GM10248 (cell line): ENCODE measurements at regions of chr3 and their contacts with region 1.

Region 1: GRCh38 chr3:23331141-23331935 is 128.2 kb downstream of the UBE2E2 start:
- DNase-seq: no peak
- CTCF ChIP-seq: no peak

Region 2: DNA sequence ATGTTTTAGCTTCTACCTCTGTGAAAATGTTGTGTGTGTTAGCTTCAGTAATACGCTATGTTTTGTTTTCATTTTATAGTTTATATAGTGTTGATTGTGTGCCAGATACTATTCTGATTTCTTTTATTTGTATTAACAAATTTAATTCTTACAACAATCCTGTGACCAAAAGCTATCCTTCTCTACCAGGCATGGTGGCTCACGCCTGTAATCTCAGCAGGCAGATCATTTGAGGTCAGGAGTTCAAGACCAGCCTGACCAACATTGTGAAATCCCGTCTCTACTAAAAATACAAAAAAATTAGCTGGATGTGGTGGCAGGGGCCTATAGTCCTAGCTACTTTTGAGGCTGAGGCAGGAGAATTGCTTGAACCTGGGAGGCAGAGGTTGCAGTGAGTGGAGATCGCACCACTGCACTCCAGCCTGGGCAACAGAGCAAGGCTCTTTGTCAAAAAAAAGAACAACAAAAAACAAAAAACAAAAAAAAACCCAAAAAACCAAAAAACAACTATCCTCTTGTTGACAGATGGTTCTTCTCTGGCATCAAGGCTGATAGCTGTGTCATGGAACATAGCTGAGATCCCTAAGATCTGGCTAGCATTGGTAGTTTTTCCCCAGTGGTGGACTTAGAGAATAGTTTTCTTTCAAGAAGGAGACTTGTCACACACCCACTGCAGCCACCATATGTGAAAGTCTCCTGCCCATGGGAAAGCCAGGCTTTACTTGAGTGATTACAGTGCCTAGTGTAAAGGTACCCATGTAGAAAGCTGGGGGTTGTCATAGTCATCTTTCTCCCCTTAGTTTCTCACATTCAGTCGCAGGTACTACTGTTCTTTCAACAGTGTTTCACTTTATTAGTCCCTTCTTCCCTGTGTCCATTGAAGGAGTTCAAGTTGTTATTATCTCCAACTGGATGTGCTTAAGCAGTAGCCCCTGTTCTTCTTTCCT is 11.7 kb before region 1 on chr3:
- CTCF ChIA-PET with region 1: interaction called, 14 read pairs
- POLR2A ChIA-PET with region 1: no interaction called
- DNase-seq: no peak
- CTCF ChIP-seq: no peak